Stomach (tissue), 19 donors: ENCODE measurements at regions of chr5 and their contacts with region 1.

Region 1: GRCh38 chr5:849651-850301 is 1.0 kb downstream of the ZDHHC11 start:
- DNase-seq: peak; percentile 48 to 91
- H3K4me3 ChIP-seq: peak overlapping the region; percentile 31 to 40 (median 36)
- H3K27ac ChIP-seq: no peak overlapping the region
- H3K4me1 ChIP-seq: peaks cover 8 to 19% (median 17%) of the 10 kb centered on the region in 4 donors
- H3K27me3 ChIP-seq: peaks cover 3 to 58% (median 27%) of the 10 kb centered on the region in 3 donors
- CTCF ChIP-seq: no peak
- EP300 ChIP-seq: no peak
- POLR2A ChIP-seq: no peak

Region 2: DNA sequence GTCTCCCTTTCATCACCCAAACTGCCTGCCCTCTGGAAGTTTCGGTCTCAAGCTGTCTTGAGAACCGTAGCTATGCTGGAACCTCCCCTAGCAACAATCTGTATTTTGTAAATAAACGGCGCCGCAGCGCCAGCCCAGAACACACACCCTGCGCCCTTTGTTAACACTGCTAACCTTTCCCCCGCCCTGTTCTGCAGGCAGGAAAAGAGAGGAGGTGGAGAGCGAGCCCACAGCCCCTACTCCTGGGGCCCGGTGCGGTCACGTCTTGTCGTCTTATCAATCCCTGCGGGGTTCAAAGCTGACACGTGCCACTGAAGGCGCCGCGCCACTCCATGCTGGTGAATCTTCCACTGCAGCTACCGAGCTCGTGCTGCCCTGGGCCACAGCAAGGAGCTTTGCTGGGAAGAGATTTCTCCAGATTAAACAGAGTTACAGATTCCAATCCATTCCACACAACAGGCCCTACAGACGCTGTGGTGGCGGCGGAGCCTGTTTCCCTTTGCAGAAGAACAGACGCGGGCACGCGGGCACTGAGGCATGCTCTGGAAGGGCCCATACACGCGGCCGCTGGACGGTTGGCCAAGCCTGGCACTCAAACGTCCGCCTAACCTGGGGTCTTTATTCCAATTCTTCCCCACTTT is 90.5 kb before region 1 on chr5:
- intact Hi-C with region 1: loop called (anchors 5 kb)
- DNase-seq: peak; percentile 90 to 97
- H3K4me3 ChIP-seq: peak overlapping the region in 3 of 4 donors; percentile 2 to 27 (median 16)
- H3K27ac ChIP-seq: peak overlapping the region; percentile 60 to 85 (median 68)
- H3K4me1 ChIP-seq: peaks cover 36 to 45% (median 39%) of the 10 kb centered on the region in 4 donors
- H3K27me3 ChIP-seq: no peaks in the 10 kb centered on the region
- CTCF ChIP-seq: no peak
- EP300 ChIP-seq: no peak
- POLR2A ChIP-seq: no peak